T-cell (primary cell): ENCODE measurements at regions of chrX and their contacts with region 1.

Region 1: DNA sequence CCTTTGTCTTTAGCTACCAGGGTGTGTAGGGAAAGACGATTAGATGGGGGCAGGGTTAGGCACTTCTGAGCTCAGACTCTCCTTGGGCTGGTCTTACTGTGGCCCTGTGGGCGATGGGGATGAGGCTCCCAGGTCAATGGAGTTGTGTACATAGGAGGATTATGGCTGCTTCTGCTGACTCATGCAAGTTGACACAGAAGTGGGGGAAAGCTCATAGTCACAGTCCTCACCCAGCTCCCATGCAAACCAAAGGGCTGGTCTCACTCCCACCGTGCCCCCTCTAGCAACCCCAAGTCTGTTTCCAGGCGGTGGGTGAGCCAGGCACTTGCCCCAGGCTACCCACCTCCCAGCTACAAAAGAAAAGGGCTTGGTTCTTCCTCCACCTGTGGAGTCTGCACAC is 24.4 kb upstream of the VSIG4 start:
- DNase-seq: no peak
- ATAC-seq: no peak
- H3K4me3 ChIP-seq: no peak overlapping the region
- H3K4me3 Mint-ChIP-seq: no peak overlapping the region
- H3K27ac ChIP-seq: no peak overlapping the region
- H3K27ac Mint-ChIP-seq: peak overlapping the region in 1 of 2 donors; percentile 44
- H3K4me1 ChIP-seq: peaks cover 8 to 23% of the 10 kb centered on the region in 2 experiments
- H3K4me1 Mint-ChIP-seq: peaks cover 39 to 46% (median 40%) of the 10 kb centered on the region in 3 donors
- H3K27me3 ChIP-seq: no peaks in the 10 kb centered on the region
- H3K27me3 Mint-ChIP-seq: peaks cover 0 to 10% of the 10 kb centered on the region in 2 donors

Region 2: DNA sequence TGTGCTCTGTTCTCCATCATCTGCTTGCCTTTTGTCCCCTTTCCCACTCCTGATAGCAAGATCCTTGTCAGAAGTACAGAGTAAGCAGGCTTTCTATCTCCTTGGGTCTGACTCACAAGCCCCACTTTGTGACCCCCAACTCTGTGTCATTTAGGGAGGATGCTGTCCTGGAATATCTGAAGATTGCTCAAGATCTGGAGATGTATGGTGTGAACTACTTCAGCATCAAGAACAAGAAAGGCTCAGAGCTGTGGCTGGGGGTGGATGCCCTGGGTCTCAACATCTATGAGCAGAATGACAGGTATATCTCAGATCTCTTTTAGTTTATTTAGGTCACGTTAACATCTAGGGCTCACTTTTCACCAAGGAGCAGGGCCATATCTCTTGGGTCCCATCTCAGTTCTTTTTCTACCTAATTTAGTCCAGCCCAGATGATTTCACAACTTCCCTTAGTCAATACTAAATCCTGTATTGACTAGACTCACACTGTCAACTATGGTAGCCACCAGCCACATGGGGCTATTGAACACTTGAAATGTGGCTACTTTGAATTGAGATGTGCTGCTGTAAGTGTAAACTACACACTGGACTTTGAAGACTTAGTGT is 332.5 kb before region 1 on chrX:
- CTCF ChIA-PET with region 1: no interaction called
- POLR2A ChIA-PET with region 1: interaction called in 1 of 2 experiments, 13 read pairs
- DNase-seq: no peak
- ATAC-seq: no peak
- H3K4me3 ChIP-seq: no peak overlapping the region
- H3K4me3 Mint-ChIP-seq: no peak overlapping the region
- H3K27ac ChIP-seq: peak overlapping the region; percentile 25
- H3K27ac Mint-ChIP-seq: peak overlapping the region; percentile 13 to 66
- H3K4me1 ChIP-seq: peaks cover 4 to 19% of the 10 kb centered on the region in 2 experiments
- H3K4me1 Mint-ChIP-seq: peaks cover 36 to 53% (median 51%) of the 10 kb centered on the region in 3 donors
- H3K27me3 ChIP-seq: no peaks in the 10 kb centered on the region
- H3K27me3 Mint-ChIP-seq: no peaks in the 10 kb centered on the region

Region 3: DNA sequence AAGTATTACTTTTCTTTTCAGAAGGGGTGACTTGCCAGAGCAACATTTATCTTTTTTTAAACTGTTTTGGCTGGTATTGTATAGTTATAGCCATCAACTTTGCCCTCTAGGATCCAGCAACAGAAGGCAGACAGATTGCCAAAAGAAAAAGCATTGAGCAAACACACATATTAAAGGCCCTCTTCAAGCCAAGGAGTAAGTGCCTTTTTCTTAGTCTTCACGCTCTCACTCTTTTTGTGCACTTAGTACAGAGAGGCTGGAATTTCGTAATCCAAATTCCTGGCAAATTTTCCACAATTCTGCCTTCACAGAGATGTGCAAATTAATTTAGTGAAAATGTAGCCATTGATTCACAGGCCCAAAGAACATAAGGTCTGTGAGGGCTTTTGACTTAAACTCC is 827.7 kb after region 1 on chrX:
- CTCF ChIA-PET with region 1: no interaction called
- POLR2A ChIA-PET with region 1: no interaction called
- DNase-seq: no peak
- ATAC-seq: no peak
- H3K4me3 ChIP-seq: no peak overlapping the region
- H3K4me3 Mint-ChIP-seq: no peak overlapping the region
- H3K27ac ChIP-seq: no peak overlapping the region
- H3K27ac Mint-ChIP-seq: no peak overlapping the region
- H3K4me1 ChIP-seq: no peaks in the 10 kb centered on the region
- H3K4me1 Mint-ChIP-seq: no peaks in the 10 kb centered on the region
- H3K27me3 ChIP-seq: no peaks in the 10 kb centered on the region
- H3K27me3 Mint-ChIP-seq: peaks cover 0 to 3% of the 10 kb centered on the region in 2 donors